ENCODE measurements at regions of chr4 and their contacts with region 1.

Region 1: DNA sequence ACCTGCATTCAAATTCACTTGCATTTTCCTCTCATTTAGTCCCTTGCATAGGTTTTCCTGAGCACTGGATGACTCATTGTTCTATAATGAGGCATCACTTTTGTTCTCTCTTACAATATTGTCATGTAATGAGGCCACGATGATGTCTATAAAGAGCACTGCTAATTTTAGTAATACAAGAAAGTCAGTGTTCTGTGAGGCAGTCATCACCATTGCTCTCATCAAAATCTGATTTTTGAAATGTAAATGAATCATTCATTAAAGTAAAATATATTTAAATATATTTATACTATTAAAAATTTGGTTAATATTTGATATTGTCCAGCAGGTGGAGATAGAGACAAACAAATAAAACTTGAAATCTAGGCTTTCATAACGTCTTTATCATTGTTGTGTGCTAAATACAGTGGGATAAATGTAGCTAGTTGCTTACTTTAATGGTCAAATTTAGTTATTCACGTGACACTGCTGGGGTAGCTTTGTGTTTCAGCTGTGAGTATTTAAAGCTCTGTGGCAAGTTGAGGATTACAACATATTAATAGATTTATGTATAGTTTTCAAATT is 15.4 kb downstream of the HMGB2 start:
- DNase-seq: no peak
- H3K4me3 Mint-ChIP-seq: no peak overlapping the region
- H3K27ac Mint-ChIP-seq: no peak overlapping the region
- H3K4me1 Mint-ChIP-seq: peaks cover 6% of the 10 kb centered on the region
- H3K27me3 Mint-ChIP-seq: no peaks in the 10 kb centered on the region

Region 2: DNA sequence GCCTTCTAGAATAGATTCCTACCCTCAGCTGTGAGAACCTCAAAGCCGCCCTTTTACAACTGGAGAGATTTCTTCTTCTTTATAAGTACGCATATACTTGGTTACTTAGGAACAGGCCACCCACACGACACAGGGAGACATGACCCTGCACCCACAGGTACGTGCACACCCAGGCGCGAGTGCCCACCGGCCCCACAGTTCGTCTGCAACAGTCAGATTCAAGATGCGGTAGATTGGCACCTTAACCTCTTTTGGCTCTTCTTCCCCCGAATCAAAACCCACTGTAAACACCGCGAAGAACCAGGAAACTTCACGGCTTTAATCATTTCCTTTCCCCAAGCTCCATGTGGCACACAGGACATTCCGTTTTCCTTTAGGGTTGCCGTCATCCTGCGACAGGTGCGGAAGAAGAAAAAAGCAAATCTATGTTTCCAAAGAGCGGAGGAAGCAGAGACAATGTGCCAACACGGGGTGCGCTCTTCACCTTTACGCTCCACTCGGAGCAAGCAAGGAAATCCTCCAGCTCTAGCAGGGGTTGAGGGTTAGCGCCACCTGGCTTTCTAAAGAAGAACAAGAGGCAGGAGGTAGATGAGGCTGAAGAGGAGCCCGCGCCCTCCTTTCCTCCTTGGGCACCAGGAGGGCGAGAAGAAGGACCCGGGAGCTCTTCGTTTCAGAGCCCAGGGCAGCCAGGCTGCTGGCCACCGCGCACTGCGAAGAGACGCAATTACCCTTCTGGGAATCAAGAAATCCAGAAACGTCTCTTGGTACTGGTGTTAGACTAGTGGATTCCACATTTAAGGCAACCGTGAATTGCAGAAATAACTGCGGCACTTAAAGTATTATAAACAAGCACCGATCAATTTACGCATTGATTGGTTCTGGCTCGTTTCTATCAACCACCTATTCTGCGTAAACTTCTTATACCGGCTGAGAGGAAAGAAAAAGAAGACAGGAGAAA is 175.6 kb after region 1 on chr4:
- intact Hi-C with region 1: loop called (anchors 2 kb)
- DNase-seq: peak; percentile 53
- H3K4me3 Mint-ChIP-seq: peak overlapping the region; percentile 81
- H3K27ac Mint-ChIP-seq: no peak overlapping the region
- H3K4me1 Mint-ChIP-seq: peaks cover 18% of the 10 kb centered on the region
- H3K27me3 Mint-ChIP-seq: peaks cover 29% of the 10 kb centered on the region

Measured in activated T-helper 2 cell treated with anti-CD3 and anti-CD28 coated beads, Interferon-gamma antibody, Interleukin-2, Interleukin-4, amounts not matched to agents 10 μg/mL and 5 μg/mL and 100 μg/mL, durations not matched to agents 14 hours and 24 hours and 36 hours (primary cell).